Natural killer cell (primary cell): ENCODE measurements at regions of chr14 and their contacts with region 1.

Region 1: DNA sequence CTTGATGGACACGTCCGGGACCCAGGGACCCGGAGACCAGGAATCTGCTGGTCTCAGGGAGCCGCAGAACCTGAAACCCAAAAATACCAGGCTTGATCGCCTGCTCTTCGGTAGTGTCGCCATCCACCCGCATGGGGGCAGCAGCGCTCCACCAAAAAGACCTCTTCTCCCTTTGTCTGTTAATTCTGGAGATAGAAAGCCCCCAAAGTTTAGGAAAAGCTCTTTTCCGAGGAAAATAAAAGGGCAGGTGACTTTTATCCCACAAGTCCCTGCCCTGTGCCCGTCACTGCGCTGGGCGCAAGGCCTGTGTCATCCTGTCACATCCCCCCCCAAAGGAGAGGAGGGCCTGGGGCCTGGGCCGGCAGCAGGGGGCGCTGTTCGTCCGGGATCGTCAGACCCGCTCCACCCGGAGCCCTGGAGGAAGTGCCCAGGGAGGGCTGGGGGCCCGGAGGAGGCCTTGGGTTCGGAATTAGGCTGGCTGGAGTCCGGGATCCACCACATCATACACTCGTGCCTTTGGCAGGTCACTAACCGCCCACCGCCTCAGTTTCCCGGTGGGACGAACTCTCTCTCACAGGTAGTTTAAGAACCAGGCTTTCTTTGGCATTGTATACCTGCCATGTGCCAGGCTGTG is 31.9 kb downstream of the DAD1 start:
- DNase-seq: peak; percentile 92 to 94
- ATAC-seq: peak; percentile 32 to 63 (median 34)
- H3K4me3 ChIP-seq: peak overlapping the region; percentile 32
- H3K4me3 Mint-ChIP-seq: peak overlapping the region; percentile 94
- H3K27ac ChIP-seq: peak overlapping the region; percentile 97
- H3K27ac Mint-ChIP-seq: peak overlapping the region; percentile 98 to 100
- H3K4me1 ChIP-seq: peaks cover 98% of the 10 kb centered on the region
- H3K4me1 Mint-ChIP-seq: peaks cover 82 to 91% of the 10 kb centered on the region in 2 donors
- H3K27me3 ChIP-seq: no peaks in the 10 kb centered on the region
- H3K27me3 Mint-ChIP-seq: peaks cover 0 to 4% of the 10 kb centered on the region in 2 donors
- CTCF ChIP-seq: peak; percentile 100

Region 2: DNA sequence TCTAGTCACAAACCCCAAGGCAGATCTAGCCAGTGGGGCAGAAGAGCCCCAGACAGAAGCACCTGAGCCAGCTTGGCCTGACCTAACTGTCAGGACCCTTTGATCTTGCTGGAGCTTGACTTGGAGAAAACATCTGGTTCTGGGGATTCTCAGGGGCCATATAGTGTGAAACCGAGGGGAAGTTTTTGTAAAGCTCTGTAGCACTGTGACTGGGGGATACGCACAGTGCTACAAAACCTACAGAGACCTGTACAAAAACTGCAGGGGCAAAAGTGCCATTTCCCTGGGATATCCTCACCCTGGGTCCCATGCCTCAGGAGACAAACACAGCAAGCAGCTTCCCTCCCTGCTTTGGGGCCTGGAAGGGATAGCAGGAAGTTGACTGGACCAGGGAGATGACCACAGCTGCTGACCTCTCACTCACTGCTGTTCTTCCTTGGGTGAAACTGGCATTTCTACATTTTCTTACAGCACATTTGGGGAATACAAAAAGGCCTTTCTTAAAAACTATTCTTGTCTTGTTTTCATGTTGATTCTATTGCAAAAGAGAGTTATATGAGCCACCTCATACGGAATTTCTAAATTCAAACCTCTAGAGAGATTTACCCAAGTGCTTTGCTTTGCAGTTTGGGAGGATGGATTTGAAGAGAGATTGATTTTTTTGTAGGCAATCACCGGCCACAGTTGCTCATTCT is 108.1 kb before region 1 on chr14:
- intact Hi-C with region 1: loop called (anchors 2 kb)
- DNase-seq: peak in 1 of 2 donors; percentile 42
- ATAC-seq: peak; percentile 58 to 73 (median 70)
- H3K4me3 ChIP-seq: peak overlapping the region; percentile 62
- H3K4me3 Mint-ChIP-seq: peak overlapping the region; percentile 96
- H3K27ac ChIP-seq: peak overlapping the region; percentile 79
- H3K27ac Mint-ChIP-seq: peak overlapping the region; percentile 80 to 89
- H3K4me1 ChIP-seq: peaks cover 58% of the 10 kb centered on the region
- H3K4me1 Mint-ChIP-seq: peaks cover 85 to 91% of the 10 kb centered on the region in 2 donors
- H3K27me3 ChIP-seq: no peaks in the 10 kb centered on the region
- H3K27me3 Mint-ChIP-seq: no peaks in the 10 kb centered on the region
- CTCF ChIP-seq: no peak

Region 3: DNA sequence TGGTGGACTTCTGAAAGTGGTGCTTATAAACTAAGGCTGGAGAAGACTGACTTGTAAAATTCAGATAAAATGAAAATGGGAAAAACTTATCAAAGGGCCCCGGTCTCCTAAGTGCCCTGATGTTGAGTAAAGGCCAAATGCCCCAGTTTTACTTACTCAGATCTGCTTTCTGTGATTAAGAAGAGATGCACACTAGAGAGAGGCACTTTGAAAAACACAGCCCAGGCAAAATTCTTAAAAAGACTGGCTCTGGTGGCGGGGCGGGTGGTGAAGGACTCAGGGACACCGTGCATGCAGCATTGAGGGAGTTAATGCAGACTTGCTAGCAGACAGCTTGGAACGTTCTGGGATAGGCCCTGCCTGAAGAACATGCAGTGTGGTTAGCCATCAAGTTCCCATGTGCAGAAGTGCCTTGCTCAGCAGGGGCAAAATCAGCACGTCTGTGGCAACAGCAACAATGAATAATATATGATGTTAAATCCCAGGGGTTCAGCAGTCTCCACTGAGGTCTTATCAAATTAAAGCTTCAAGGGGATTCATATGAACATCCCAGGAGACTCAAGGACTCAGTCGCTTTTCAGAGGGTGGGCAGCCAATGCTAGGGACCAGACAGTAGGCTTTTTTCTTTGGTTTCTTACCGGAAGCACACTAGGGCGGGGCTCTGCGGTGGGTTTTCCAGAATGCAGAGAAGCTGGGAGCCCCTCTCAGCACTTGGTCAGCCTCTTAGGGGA is 73.1 kb before region 1 on chr14:
- intact Hi-C with region 1: loop called (anchors 2 kb)
- DNase-seq: peak in 1 of 2 donors; percentile 31
- ATAC-seq: peak; percentile 33 to 48 (median 35)
- H3K4me3 ChIP-seq: peak overlapping the region; percentile 17
- H3K4me3 Mint-ChIP-seq: peak overlapping the region; percentile 82
- H3K27ac ChIP-seq: peak overlapping the region; percentile 74
- H3K27ac Mint-ChIP-seq: peak overlapping the region; percentile 80 to 89
- H3K4me1 ChIP-seq: peaks cover 77% of the 10 kb centered on the region
- H3K4me1 Mint-ChIP-seq: peaks cover 97 to 98% of the 10 kb centered on the region in 2 donors
- H3K27me3 ChIP-seq: no peaks in the 10 kb centered on the region
- H3K27me3 Mint-ChIP-seq: no peaks in the 10 kb centered on the region
- CTCF ChIP-seq: no peak

Region 4: DNA sequence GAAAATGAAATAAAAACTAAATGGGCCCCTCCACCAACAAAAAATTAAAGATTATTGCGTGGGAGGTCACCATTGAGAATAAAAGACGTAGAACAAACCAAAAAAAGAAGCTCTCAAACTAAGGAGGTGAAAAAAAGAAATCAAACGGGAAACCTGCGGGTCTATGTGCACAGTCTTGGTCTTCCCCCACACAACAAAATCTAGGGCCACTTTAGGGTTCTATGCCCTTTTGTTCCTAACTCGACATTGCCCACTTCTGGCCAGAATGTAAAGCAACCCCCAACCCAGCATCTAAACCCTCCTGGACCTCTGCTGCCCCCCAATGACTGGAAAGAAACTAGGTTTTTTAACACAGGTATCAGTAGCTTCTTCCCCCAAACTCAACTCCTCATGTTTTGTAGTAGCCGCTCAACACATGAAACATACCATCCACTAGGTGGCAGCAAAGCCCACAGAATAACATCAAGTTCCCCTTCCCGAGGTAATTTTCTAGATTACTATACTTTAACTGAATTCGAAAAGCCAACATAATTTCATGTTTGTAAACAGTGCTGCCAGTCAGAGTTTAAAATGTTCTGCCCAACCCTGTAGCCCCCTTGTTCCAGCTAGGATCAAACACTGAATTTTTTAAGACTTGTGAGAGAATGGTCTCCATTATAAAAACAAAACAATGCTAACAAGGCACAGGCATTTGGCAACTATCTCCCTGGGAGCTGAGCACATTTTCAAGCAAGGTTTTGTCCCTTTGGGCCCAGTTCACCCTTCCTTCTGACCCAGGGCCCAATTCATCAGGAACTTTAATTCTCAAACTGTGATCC is 13.2 kb after region 1 on chr14:
- intact Hi-C with region 1: loop called (anchors 1 kb)
- DNase-seq: peak; percentile 61 to 98
- ATAC-seq: peak; percentile 84 to 97 (median 88)
- H3K4me3 ChIP-seq: peak overlapping the region; percentile 25
- H3K4me3 Mint-ChIP-seq: peak overlapping the region; percentile 77
- H3K27ac ChIP-seq: peak overlapping the region; percentile 82
- H3K27ac Mint-ChIP-seq: peak overlapping the region; percentile 98 to 100
- H3K4me1 ChIP-seq: peaks cover 38% of the 10 kb centered on the region
- H3K4me1 Mint-ChIP-seq: peaks cover 51% of the 10 kb centered on the region in 2 donors
- H3K27me3 ChIP-seq: no peaks in the 10 kb centered on the region
- H3K27me3 Mint-ChIP-seq: no peaks in the 10 kb centered on the region
- CTCF ChIP-seq: peak; percentile 91

Region 5: GRCh38 chr14:22766456-22767322 is 209.6 kb after region 1 on chr14 and contains the start of gene OXA1L:
- intact Hi-C with region 1: loop called (anchors 1 kb)
- DNase-seq: peak; percentile 90 to 99
- ATAC-seq: peak; percentile 92 to 95 (median 95)
- H3K4me3 ChIP-seq: peak within 1 kb of the TSS; percentile 86
- H3K4me3 Mint-ChIP-seq: peak within 1 kb of the TSS; percentile 92
- H3K27ac ChIP-seq: peak within 1 kb of the TSS; percentile 79
- H3K27ac Mint-ChIP-seq: peak within 1 kb of the TSS; percentile 93 to 94
- H3K4me1 ChIP-seq: peaks cover 14% of the 10 kb centered on the region
- H3K4me1 Mint-ChIP-seq: peaks cover 35 to 36% of the 10 kb centered on the region in 2 donors
- H3K27me3 ChIP-seq: no peaks in the 10 kb centered on the region
- H3K27me3 Mint-ChIP-seq: no peaks in the 10 kb centered on the region
- CTCF ChIP-seq: no peak
- total RNA-seq, gene OXA1L: 121 to 143 (median 125) TPM

Region 6: DNA sequence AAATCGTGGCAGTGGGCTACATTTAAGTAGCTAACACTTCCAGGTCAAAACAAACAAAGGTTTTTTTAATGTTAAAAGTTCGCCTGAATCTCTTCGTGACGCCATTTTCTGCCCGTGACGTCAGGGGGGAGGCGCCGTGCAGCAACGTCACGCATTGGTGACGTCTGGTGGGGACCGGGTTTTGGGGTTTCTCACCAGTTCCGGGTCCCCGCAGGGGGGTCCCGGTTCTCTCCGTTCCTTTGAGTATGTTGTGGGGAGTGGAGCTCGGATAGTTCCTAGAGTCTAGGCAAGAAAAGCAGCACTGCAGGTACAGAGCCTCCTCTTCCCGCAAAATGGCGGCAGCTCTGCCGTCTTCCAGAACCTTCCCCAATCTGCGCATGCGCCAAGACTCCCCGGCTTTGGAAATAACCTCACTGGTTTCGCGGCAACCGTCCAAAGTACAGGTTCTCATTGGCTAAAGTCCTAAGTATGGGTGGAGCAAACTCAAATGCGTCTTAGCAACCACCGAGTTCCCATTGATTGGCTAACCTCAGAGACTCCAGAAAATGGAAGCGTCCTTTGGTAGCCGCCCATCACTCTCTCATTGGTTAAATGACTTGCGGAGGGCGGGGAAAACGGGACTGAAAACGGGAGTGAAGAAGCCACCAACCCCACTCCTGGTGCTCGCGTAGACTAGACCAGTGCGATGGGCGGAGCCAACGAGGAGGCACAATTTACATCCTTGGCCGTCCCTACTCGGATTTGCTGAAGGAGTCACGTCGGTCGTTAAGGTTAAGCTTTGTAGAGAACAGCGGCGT is 361.9 kb after region 1 on chr14 and contains the start of gene RBM23:
- intact Hi-C with region 1: loop called (anchors 1 kb)
- DNase-seq: peak; percentile 99 to 100
- ATAC-seq: peak; percentile 86 to 97 (median 91)
- H3K4me3 ChIP-seq: peak within 1 kb of the TSS; percentile 64
- H3K4me3 Mint-ChIP-seq: peak within 1 kb of the TSS; percentile 99
- H3K27ac ChIP-seq: peak within 1 kb of the TSS; percentile 96
- H3K27ac Mint-ChIP-seq: peak within 1 kb of the TSS; percentile 100
- H3K4me1 ChIP-seq: peaks cover 21% of the 10 kb centered on the region
- H3K4me1 Mint-ChIP-seq: peaks cover 25 to 30% of the 10 kb centered on the region in 2 donors
- H3K27me3 ChIP-seq: no peaks in the 10 kb centered on the region
- H3K27me3 Mint-ChIP-seq: peaks cover 0 to 3% of the 10 kb centered on the region in 2 donors
- CTCF ChIP-seq: no peak
- total RNA-seq, gene RBM23: 86.4 to 120 (median 108) TPM